Activated CD4-positive, alpha-beta memory T cell treated with anti-CD3 and anti-CD28 coated beads, Interleukin-2, amount 10 ng/mL, durations not matched to agents 7 days and 5 days (primary cell): ENCODE measurements at regions of chr2 and their contacts with region 1.

Region 1: DNA sequence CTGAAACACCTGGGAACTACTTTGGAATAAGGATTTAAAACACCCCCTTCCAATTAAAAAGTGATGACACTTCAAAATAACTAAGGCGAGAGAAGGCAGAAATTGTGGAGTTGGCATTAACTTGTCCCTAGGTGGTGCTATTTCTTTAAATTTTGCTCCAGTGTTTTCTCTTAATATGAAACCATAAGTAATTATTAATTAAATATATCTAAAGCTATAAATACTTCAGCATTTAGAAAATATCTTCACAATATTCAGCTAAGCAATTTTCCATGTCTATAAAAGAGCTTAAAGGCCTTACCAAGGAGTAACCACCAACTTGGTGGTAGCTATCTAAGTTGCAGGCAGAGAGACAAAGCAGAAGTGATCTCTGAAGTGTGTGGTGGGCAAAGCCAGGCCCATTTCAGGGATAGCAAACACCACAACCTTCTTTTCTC is 186.8 kb upstream of the PGAP1 start:
- DNase-seq: no peak
- H3K4me3 Mint-ChIP-seq: no peak overlapping the region
- H3K27ac Mint-ChIP-seq: no peak overlapping the region
- H3K4me1 Mint-ChIP-seq: peaks cover 14% of the 10 kb centered on the region
- H3K27me3 Mint-ChIP-seq: no peaks in the 10 kb centered on the region

Region 2: DNA sequence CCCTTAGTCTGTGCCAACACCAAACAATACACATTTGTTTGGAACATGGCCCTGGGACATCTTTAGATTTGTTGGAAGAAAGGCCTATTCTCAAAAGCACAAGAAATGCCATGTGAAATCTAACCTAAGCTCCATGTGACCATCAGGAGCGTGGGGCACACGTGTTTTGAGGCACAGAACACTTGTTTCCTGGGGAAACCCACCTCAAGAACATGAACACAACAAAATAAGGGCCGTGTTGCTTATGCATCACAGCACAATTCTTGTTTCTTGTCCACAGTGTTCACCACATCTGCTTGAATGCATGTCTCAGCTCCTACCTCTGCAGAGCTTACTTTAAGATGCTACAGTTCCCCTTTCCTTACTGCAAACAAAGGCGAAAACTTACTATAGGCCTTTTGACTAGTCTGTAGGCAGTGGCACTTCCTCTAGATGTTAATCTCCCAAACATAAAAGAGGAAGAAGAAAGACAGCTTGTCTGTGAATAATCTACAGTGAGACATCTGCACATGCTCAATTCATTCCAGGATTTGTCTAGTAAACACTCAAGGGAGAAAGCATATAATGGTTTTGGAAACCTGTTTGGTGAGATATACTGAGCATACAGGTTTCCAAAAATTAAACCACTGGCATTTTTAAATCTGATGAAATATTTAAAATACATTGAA is 32.3 kb after region 1 on chr2:
- CTCF ChIA-PET with region 1: interaction called, 10 read pairs
- POLR2A ChIA-PET with region 1: interaction called, 5 read pairs
- DNase-seq: no peak
- H3K4me3 Mint-ChIP-seq: no peak overlapping the region
- H3K27ac Mint-ChIP-seq: peak overlapping the region; percentile 68
- H3K4me1 Mint-ChIP-seq: peaks cover 63% of the 10 kb centered on the region
- H3K27me3 Mint-ChIP-seq: no peaks in the 10 kb centered on the region

Region 3: GRCh38 chr2:197168705-197169104 is 55.4 kb after region 1 on chr2:
- CTCF ChIA-PET with region 1: interaction called, 49 read pairs
- POLR2A ChIA-PET with region 1: no interaction called
- DNase-seq: peak; percentile 68
- H3K4me3 Mint-ChIP-seq: no peak overlapping the region
- H3K27ac Mint-ChIP-seq: no peak overlapping the region
- H3K4me1 Mint-ChIP-seq: peaks cover 35% of the 10 kb centered on the region
- H3K27me3 Mint-ChIP-seq: no peaks in the 10 kb centered on the region

Region 4: GRCh38 chr2:197359859-197360258 is 246.6 kb after region 1 on chr2:
- CTCF ChIA-PET with region 1: interaction called, 13 read pairs
- POLR2A ChIA-PET with region 1: no interaction called
- DNase-seq: no peak
- H3K4me3 Mint-ChIP-seq: no peak overlapping the region
- H3K27ac Mint-ChIP-seq: no peak overlapping the region
- H3K4me1 Mint-ChIP-seq: peaks cover 11% of the 10 kb centered on the region
- H3K27me3 Mint-ChIP-seq: no peaks in the 10 kb centered on the region